ENCODE measurements at regions of chr10 and their contacts with region 1.

Region 1: DNA sequence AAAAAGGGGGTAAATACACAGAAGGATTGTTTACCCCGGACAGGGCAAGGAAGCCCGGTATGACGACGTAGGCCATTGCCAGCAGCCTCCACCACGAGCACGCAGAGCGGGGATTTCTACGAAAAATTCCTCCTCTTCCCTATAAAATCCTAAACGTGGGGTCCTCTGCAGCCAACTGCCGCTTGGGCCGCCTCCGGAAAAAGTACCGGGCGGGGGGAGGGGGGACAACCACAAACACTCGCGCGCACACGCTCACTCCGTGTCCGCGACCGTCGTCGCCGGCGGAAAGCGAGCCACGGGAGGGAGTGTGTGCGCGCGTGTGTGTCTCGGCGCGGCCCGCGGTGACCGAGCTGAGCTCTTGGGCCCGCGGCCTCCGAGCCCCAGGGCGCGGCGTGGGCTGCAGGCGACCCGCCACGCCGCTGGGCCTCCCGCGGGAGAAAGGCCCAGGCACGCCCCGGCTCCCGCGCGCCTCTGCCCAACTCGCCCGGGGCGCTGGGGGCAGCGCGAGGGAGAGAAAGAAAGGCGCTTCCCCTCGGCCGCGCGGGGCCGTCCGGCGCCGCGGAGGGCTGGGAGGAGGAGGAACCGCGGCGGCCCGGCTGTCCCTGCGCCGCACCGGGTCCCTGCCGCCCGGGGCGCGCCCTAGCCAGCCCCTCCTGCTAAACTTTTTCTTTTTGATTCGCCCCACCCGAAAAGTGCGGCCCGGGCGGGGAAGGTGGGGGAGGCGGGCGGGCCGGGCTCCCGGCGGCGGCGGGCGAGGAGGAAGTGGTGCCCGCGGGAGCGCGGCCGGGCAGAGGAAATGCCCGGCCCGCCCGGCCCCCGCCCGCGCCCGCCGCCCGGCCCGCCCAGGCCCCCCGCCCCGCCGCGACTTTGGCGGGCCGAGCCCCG is 1.5 kb downstream of the CTBP2 start:
- DNase-seq: peak in 3 of 4 donors; percentile 52 to 91 (median 71)
- ATAC-seq: peak; percentile 13
- H3K4me3 ChIP-seq: peak overlapping the region; percentile 64 to 83
- H3K27ac ChIP-seq: peak overlapping the region; percentile 97
- H3K4me1 ChIP-seq: peaks cover 33 to 50% of the 10 kb centered on the region in 2 donors
- H3K27me3 ChIP-seq: peaks cover 0 to 15% of the 10 kb centered on the region in 2 donors
- CTCF ChIP-seq: no peak

Region 2: GRCh38 chr10:125057158-125058001 is 101.5 kb before region 1 on chr10:
- intact Hi-C with region 1: loop called in 1 of 2 experiments (anchors 10 kb)
- DNase-seq: peak; percentile 47 to 90 (median 68)
- ATAC-seq: peak; percentile 59
- H3K4me3 ChIP-seq: no peak overlapping the region
- H3K27ac ChIP-seq: peak overlapping the region; percentile 78 to 84
- H3K4me1 ChIP-seq: peaks cover 47 to 75% of the 10 kb centered on the region in 2 donors
- H3K27me3 ChIP-seq: no peaks in the 10 kb centered on the region
- CTCF ChIP-seq: no peak